Astrocyte of the cerebellum (primary cell): ENCODE measurements at regions of chr10 and their contacts with region 1.

Region 1: DNA sequence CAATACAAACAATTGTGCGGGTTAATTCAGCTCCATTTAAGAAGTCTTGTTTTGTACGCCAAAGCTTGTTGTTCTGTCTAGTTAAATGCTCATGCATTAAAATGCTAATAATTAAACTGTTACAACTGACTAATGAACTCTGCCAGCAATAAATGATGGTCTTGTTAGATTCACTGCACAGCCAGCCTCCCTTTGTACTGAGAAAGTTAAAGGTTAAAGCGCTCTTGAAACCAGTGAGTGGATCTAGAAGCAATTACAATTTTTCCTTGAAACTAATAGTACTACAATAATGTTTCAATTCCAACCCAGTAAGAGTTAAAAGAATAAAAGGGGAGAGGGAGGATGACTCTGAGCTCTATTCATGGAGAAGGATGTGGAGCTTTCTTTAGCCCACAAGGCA is 233.0 kb downstream of the EMX2 start:
- DNase-seq: no peak
- H3K4me3 ChIP-seq: no peak overlapping the region
- CTCF ChIP-seq: no peak

Region 2: GRCh38 chr10:117734731-117735405 is 40.7 kb before region 1 on chr10:
- in situ Hi-C with region 1: no loop called
- DNase-seq: no peak
- H3K4me3 ChIP-seq: no peak overlapping the region
- CTCF ChIP-seq: no peak

Region 3: GRCh38 chr10:117823980-117824379 is 48.5 kb after region 1 on chr10:
- in situ Hi-C with region 1: loop called (anchors 10 kb)
- DNase-seq: no peak
- H3K4me3 ChIP-seq: no peak overlapping the region
- CTCF ChIP-seq: no peak

Region 4: DNA sequence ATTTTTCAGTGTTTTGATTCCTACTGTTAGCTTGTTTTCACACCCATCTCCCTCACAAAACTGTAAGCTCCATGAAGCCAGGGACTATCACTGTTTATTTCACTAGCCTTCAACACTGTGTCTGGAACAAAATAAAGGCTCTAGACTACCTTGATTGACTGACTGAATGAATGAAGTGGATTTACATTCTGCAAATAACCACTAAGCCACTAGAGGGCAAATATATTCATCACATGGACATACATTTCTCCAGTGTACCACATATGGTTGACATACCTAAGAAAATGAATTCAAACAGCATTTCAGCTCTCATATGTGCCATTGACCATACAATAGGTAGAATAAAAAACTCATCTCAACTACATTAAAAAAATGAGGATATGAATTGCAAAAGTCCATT is 85.3 kb after region 1 on chr10:
- in situ Hi-C with region 1: no loop called
- DNase-seq: no peak
- H3K4me3 ChIP-seq: no peak overlapping the region
- CTCF ChIP-seq: peak; percentile 17